PC-3 (cell line): ENCODE measurements at regions of chr11 and their contacts with region 1.

Region 1: GRCh38 chr11:73184953-73185671 is 33.0 kb upstream of the P2RY2 start:
- DNase-seq: peak; percentile 95
- ATAC-seq: peak; percentile 57
- H3K4me3 ChIP-seq: peak overlapping the region; percentile 44
- H3K27ac ChIP-seq: peak overlapping the region; percentile 95
- H3K4me1 ChIP-seq: peaks cover 43% of the 10 kb centered on the region
- H3K27me3 ChIP-seq: no peaks in the 10 kb centered on the region
- CTCF ChIP-seq: peak; percentile 98

Region 2: GRCh38 chr11:73195231-73195992 is 10.3 kb after region 1 on chr11:
- CTCF ChIA-PET with region 1: interaction called, 10 read pairs
- POLR2A ChIA-PET with region 1: interaction called, 12 read pairs
- intact Hi-C with region 1: loop called (anchors 1 kb)
- DNase-seq: peak; percentile 99
- ATAC-seq: peak; percentile 79
- H3K4me3 ChIP-seq: peak overlapping the region; percentile 46
- H3K27ac ChIP-seq: peak overlapping the region; percentile 98
- H3K4me1 ChIP-seq: peaks cover 74% of the 10 kb centered on the region
- H3K27me3 ChIP-seq: no peaks in the 10 kb centered on the region
- CTCF ChIP-seq: peak; percentile 56

Region 3: GRCh38 chr11:73205661-73206343 is 20.7 kb after region 1 on chr11:
- CTCF ChIA-PET with region 1: interaction called, 4 read pairs
- POLR2A ChIA-PET with region 1: interaction called, 5 read pairs
- intact Hi-C with region 1: loop called (anchors 2 kb)
- DNase-seq: no peak
- ATAC-seq: no peak
- H3K4me3 ChIP-seq: no peak overlapping the region
- H3K27ac ChIP-seq: peak overlapping the region; percentile 42
- H3K4me1 ChIP-seq: peaks cover 30% of the 10 kb centered on the region
- H3K27me3 ChIP-seq: no peaks in the 10 kb centered on the region
- CTCF ChIP-seq: no peak

Region 4: DNA sequence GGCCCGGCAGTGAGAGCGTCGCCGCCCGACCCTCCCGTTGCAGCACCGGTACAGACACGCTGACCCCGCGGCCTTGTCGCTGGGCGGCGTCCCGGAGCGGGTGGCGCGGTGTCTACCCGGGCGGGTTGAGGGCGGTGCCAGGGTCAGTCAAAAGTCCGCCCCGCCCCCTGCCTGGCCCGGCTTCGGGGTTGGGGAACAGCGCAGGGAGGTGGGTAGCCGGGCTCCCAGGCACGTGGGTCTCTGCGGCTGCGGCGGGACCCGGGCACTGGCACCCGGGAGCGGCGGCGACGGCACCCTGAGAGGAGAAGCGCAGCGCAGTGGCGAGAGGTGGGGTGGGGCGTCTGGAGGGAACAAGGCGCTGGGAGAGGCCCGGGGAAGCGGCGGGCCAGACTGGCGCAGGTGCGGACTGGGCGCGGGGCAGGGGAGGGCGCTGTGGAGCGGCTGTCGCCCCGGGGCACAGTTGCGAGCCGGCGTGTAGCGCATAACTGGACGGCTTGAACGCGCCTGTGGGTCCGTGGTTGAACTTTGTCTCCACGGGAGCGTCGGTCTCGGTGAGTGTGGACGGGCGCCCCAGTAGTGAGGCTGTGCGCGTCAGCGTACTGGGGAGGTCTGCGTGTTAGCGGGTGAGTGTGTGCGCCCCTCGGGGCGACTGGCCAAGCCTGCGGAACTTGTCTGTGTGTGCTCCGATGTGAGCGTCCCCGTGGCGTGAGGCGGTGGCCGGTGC is 33.2 kb after region 1 on chr11 and contains the start of gene P2RY2:
- CTCF ChIA-PET with region 1: interaction called, 7 read pairs
- POLR2A ChIA-PET with region 1: interaction called, 4 read pairs
- intact Hi-C with region 1: loop called (anchors 1 kb)
- DNase-seq: peak; percentile 81
- ATAC-seq: peak; percentile 84
- H3K4me3 ChIP-seq: peak within 1 kb of the TSS; percentile 79
- H3K27ac ChIP-seq: peak within 1 kb of the TSS; percentile 33
- H3K4me1 ChIP-seq: peaks cover 37% of the 10 kb centered on the region
- H3K27me3 ChIP-seq: no peaks in the 10 kb centered on the region
- CTCF ChIP-seq: peak; percentile 80
- total RNA-seq, gene P2RY2: 54.8 and 72.9 TPM in 2 replicates

Region 5: DNA sequence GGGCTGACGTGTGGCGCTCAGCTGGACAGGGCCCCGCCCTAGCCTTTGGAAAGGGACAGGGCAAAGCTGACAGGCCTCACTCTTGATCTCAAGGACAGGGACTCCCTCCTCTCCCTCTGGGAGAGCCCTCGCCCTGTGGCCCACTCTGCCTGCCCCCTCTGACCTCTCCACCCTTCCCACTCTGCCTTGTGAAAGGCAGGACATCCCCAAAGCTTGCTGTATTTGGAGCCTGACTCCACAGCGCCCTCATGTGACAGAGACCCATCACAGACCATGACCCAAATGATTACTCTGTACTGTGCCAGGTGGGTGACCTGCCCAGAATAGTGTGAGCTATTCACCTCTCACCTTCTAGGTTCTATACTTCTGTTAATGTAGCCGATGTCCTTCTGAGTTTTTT is 51.7 kb after region 1 on chr11:
- CTCF ChIA-PET with region 1: interaction called, 32 read pairs
- POLR2A ChIA-PET with region 1: no interaction called
- intact Hi-C with region 1: loop called (anchors 1 kb)
- DNase-seq: peak; percentile 77
- ATAC-seq: peak; percentile 59
- H3K4me3 ChIP-seq: no peak overlapping the region
- H3K27ac ChIP-seq: no peak overlapping the region
- H3K4me1 ChIP-seq: peaks cover 38% of the 10 kb centered on the region
- H3K27me3 ChIP-seq: no peaks in the 10 kb centered on the region
- CTCF ChIP-seq: peak; percentile 95

Region 6: GRCh38 chr11:73242251-73243079 is 57.4 kb after region 1 on chr11:
- CTCF ChIA-PET with region 1: interaction called, 32 read pairs
- POLR2A ChIA-PET with region 1: no interaction called
- intact Hi-C with region 1: loop called (anchors 1 kb)
- DNase-seq: peak; percentile 74
- ATAC-seq: peak; percentile 73
- H3K4me3 ChIP-seq: no peak overlapping the region
- H3K27ac ChIP-seq: no peak overlapping the region
- H3K4me1 ChIP-seq: peaks cover 22% of the 10 kb centered on the region
- H3K27me3 ChIP-seq: no peaks in the 10 kb centered on the region
- CTCF ChIP-seq: peak; percentile 95

Region 7: GRCh38 chr11:73288873-73289707 is 104.0 kb after region 1 on chr11:
- CTCF ChIA-PET with region 1: interaction called, 10 read pairs
- POLR2A ChIA-PET with region 1: interaction called, 5 read pairs
- intact Hi-C with region 1: loop called (anchors 1 kb)
- DNase-seq: peak; percentile 82
- ATAC-seq: peak; percentile 79
- H3K4me3 ChIP-seq: peak overlapping the region; percentile 19; the same call in 1 of the 2 replicates
- H3K27ac ChIP-seq: peak overlapping the region; percentile 41
- H3K4me1 ChIP-seq: peaks cover 11% of the 10 kb centered on the region
- H3K27me3 ChIP-seq: no peaks in the 10 kb centered on the region
- CTCF ChIP-seq: peak; percentile 99